ENCODE measurements at regions of chr15 and their contacts with region 1.

Region 1: GRCh38 chr15:92714477-92715401 is 59.2 kb upstream of the FAM174B start:
- DNase-seq: peak; percentile 71 to 83
- ATAC-seq: peak; percentile 92 to 94
- H3K4me3 ChIP-seq: peak overlapping the region; percentile 51
- H3K27ac ChIP-seq: peak overlapping the region; percentile 69 to 87
- H3K4me1 ChIP-seq: no peaks in the 10 kb centered on the region
- CTCF ChIP-seq: peak; percentile 99
- EP300 ChIP-seq: no peak
- POLR2A ChIP-seq: peak; percentile 49
- RAD21 ChIP-seq: peak; percentile 98 to 99

Region 2: DNA sequence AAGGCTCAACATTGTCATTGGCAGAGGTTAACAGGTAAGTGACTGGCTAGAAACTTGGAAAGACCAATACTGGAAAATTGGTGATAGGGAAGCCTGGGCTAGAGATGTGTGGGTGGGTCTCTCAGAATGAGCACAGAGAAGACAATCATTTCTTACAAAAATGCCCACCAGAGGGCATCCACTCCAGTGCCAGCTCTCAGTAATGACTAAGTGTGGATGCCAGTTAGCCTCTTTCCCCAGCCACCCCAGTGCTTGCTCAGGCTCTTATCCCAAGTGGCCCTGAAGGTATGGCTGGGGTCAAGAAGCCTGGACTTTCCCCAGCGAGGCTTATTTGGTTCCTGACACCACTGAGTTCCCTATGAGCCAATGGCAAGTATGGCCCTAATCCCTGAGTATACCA is 437.0 kb before region 1 on chr15:
- CTCF ChIA-PET with region 1: interaction called, 44 read pairs
- POLR2A ChIA-PET with region 1: no interaction called
- DNase-seq: peak; percentile 42 to 48
- ATAC-seq: peak; percentile 93 to 98
- H3K4me3 ChIP-seq: no peak overlapping the region
- H3K27ac ChIP-seq: no peak overlapping the region
- H3K4me1 ChIP-seq: no peaks in the 10 kb centered on the region
- CTCF ChIP-seq: peak; percentile 50
- EP300 ChIP-seq: no peak
- POLR2A ChIP-seq: no peak
- RAD21 ChIP-seq: peak; percentile 55 to 56

Region 3: DNA sequence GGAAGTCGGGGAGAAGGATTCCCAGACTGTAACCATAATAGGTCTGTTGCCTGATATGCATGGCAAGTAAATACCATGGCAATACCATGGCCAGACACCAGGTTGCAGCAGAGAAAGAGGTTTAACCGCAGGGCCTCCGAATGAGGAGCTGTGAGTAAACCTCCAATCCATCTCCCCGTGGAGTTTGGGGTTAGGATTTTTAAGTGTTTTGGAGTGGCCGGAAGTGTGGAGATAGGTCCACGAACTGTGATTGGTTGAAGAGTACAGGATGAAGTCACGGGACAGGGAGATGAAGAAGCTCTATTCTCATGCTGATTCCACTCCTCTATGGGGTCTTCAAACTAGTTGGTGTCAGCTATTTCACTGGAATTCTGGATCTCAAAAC is 193.1 kb before region 1 on chr15:
- CTCF ChIA-PET with region 1: interaction called, 102 read pairs
- POLR2A ChIA-PET with region 1: interaction called, 9 read pairs
- DNase-seq: peak; percentile 80 to 81
- ATAC-seq: peak; percentile 98 to 99
- H3K4me3 ChIP-seq: no peak overlapping the region
- H3K27ac ChIP-seq: no peak overlapping the region
- H3K4me1 ChIP-seq: no peaks in the 10 kb centered on the region
- CTCF ChIP-seq: peak; percentile 70
- EP300 ChIP-seq: no peak
- POLR2A ChIP-seq: no peak
- RAD21 ChIP-seq: peak; percentile 86 to 88

Region 4: GRCh38 chr15:92603743-92604470 is 110.8 kb before region 1 on chr15:
- CTCF ChIA-PET with region 1: no interaction called
- POLR2A ChIA-PET with region 1: no interaction called
- DNase-seq: no peak
- ATAC-seq: peak; percentile 19 to 41; a peak in 3 of 6 replicates
- H3K4me3 ChIP-seq: no peak overlapping the region
- H3K27ac ChIP-seq: no peak overlapping the region
- H3K4me1 ChIP-seq: 0 out of 3 replicates have a peak, but pooled peaks cover 3% of the 10 kb centered on the region
- CTCF ChIP-seq: no peak
- EP300 ChIP-seq: no peak
- POLR2A ChIP-seq: no peak
- RAD21 ChIP-seq: no peak

Region 5: GRCh38 chr15:92665100-92665555 is 49.6 kb before region 1 on chr15:
- CTCF ChIA-PET with region 1: interaction called, 10 read pairs
- POLR2A ChIA-PET with region 1: no interaction called
- DNase-seq: no peak
- ATAC-seq: no peak
- H3K4me3 ChIP-seq: no peak overlapping the region
- H3K27ac ChIP-seq: no peak overlapping the region
- H3K4me1 ChIP-seq: peaks cover 42% of the 10 kb centered on the region
- CTCF ChIP-seq: no peak
- EP300 ChIP-seq: no peak
- POLR2A ChIP-seq: no peak
- RAD21 ChIP-seq: no peak

Region 6: GRCh38 chr15:92725171-92725570 is 10.4 kb after region 1 on chr15:
- CTCF ChIA-PET with region 1: interaction called, 16 read pairs
- POLR2A ChIA-PET with region 1: no interaction called
- DNase-seq: no peak
- ATAC-seq: no peak
- H3K4me3 ChIP-seq: no peak overlapping the region
- H3K27ac ChIP-seq: no peak overlapping the region
- H3K4me1 ChIP-seq: no peaks in the 10 kb centered on the region
- CTCF ChIP-seq: no peak
- EP300 ChIP-seq: no peak
- POLR2A ChIP-seq: no peak
- RAD21 ChIP-seq: no peak

Region 7: DNA sequence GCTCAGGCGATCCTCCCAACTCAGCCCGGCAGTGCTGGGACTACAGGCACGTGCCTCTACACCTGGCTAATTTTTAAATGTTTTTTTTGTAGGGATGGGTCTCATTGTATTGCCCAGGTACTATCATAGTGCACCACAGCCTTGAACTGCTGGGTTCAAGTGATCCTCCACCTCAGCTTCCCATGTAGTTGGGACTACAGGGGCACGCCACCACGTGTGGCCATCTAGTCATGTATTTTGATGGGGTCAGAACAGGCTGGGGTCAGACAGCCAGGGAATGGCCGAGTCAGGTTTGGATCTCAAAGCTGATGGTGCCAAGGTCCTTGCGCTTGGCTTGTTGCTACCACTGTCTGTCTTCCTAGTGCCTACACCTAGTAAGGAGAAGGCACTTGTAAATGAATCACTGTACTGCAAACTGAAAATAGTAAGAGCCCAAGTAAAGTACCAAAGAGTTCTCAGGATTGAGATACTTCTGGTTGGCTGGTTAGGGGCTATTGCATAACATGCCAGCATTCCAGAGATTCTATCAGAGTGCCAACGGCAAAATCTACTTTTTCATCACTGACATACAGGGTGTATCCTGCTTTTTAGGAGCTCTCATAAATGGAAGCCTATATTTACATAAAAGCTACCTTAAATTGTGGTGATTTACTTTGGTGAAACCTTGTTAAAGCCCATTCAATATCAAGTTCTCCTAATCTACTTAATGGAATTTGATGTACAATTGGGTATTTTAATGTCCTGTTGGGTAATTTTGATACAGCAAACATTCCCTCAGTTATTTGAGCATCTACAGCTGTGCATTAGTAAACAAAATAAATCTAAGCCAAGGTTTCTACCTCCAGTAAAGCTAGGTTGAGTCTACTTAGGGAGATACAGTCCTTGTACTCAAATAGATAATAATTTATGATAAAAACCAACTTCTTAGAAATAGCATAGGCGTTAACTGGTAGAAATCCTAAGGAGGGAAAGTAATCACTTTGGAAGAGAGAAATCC is 154.6 kb after region 1 on chr15:
- CTCF ChIA-PET with region 1: no interaction called
- POLR2A ChIA-PET with region 1: no interaction called
- DNase-seq: peak in 1 of 2 experiments; percentile 84
- ATAC-seq: peak; percentile 82 to 84
- H3K4me3 ChIP-seq: peak overlapping the region; percentile 13; the same call in 1 of the 3 replicates
- H3K27ac ChIP-seq: peak overlapping the region; percentile 84 to 90
- H3K4me1 ChIP-seq: peaks cover 40% of the 10 kb centered on the region
- CTCF ChIP-seq: no peak
- EP300 ChIP-seq: peak in 1 of 2 experiments; percentile 66; a peak in 1 of 5 replicates
- POLR2A ChIP-seq: no peak
- RAD21 ChIP-seq: 0 out of 5 replicates have a peak, but pooled peaks of 1 of the 2 experiments have one; percentile 21

Region 8: DNA sequence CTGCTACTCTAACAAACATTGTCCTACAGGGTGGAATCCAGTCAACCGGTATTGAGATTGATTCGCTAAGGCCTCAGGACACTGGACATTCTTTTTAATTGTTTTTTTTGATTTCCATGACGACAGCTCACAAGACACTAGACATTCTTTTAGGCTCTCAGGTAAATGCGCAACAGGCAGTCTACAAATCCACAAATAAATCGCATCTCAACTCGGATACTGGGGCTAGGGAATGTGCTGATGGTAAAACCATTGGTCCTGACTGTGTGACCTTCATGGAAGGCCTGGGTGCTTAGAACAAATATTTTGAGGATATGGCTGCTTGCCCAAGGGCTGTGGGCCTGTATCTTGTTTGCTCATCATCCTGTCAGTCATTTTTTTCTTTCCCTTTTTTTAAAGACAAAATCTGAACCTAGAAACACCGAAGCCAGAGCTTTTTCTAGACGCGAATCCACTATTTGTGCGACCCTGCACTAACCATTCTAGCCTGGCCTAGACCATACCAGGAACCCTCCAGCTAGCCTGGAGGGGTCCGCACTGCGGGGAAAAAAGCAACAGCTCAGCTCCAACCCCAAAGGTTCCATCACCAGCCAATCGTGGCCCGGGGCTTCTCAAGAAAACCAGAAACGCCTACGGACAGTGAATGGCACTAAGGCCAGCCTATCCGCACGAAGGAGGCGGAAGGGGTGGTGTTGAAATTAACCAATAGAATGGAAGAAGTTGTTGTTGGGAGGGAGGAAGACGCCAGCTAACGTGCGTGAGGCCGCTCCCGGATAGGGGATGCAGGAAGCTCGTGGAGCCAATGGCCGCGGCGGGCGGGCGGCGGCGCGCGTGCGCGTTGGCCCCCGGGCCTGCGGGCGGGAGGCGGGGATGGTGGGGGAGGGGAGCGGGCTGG is 167.3 kb after region 1 on chr15:
- CTCF ChIA-PET with region 1: no interaction called
- POLR2A ChIA-PET with region 1: no interaction called
- DNase-seq: peak; percentile 99 to 100
- ATAC-seq: peak; percentile 95
- H3K4me3 ChIP-seq: peak overlapping the region; percentile 34
- H3K27ac ChIP-seq: peak overlapping the region; percentile 86 to 99
- H3K4me1 ChIP-seq: peaks cover 36% of the 10 kb centered on the region
- CTCF ChIP-seq: no peak
- EP300 ChIP-seq: no peak
- POLR2A ChIP-seq: peak; percentile 85
- RAD21 ChIP-seq: no peak

Region 9: GRCh38 chr15:92949604-92950249 is 235.0 kb after region 1 on chr15:
- CTCF ChIA-PET with region 1: no interaction called
- POLR2A ChIA-PET with region 1: no interaction called
- DNase-seq: peak in 1 of 2 experiments; percentile 35
- ATAC-seq: no peak
- H3K4me3 ChIP-seq: no peak overlapping the region
- H3K27ac ChIP-seq: peak overlapping the region in 1 of 2 experiments; percentile 24; a peak in 1 of 6 replicates
- H3K4me1 ChIP-seq: no peaks in the 10 kb centered on the region
- CTCF ChIP-seq: no peak
- EP300 ChIP-seq: no peak
- POLR2A ChIP-seq: no peak
- RAD21 ChIP-seq: no peak

Measured in A549 (cell line).